ENCODE measurements at regions of chr2 and their contacts with region 1.

Region 1: DNA sequence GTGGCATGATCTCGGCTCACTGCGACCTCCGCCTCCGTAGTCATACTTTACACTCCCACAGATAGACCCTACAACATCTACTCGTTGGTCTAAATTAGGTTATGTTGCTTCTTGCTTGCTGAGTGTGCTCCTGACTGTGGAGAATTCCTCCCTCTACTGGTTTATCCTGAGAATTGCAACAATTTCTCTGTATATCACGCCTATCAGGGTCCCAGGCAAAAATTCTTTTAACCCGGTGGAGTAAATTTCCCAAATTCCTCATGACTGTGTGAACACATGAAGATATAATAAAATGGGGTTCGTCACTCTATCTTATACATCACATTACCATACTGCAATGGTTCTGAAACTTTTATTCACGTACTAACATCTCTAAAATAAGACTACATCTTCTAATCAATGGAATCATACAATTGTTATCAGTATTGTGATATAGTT is 156.7 kb downstream of the EVA1A start:
- DNase-seq: peak in 1 of 2 donors; percentile 7
- ATAC-seq: peak in 4 of 8 donors; percentile 47 to 61 (median 50)
- H3K4me3 ChIP-seq: no peak overlapping the region
- H3K27ac ChIP-seq: no peak overlapping the region
- H3K4me1 ChIP-seq: no peaks in the 10 kb centered on the region
- H3K27me3 ChIP-seq: peaks cover 0 to 59% (median 28%) of the 10 kb centered on the region in 7 donors
- CTCF ChIP-seq: peak; percentile 64 to 91 (median 79)

Region 2: GRCh38 chr2:74690571-74690970 is 713.4 kb before region 1 on chr2:
- intact Hi-C with region 1: loop called in 1 of 10 experiments (anchors 10 kb)
- DNase-seq: peak in 1 of 2 donors; percentile 13
- ATAC-seq: peak in 6 of 8 donors; percentile 38 to 80 (median 54)
- H3K4me3 ChIP-seq: no peak overlapping the region
- H3K27ac ChIP-seq: no peak overlapping the region
- H3K4me1 ChIP-seq: peaks cover 0 to 3% (median 0%) of the 10 kb centered on the region in 9 donors
- H3K27me3 ChIP-seq: peaks cover 0 to 14% (median 0%) of the 10 kb centered on the region in 7 donors
- CTCF ChIP-seq: peak in 8 of 9 donors; percentile 18 to 78 (median 71)

Region 3: DNA sequence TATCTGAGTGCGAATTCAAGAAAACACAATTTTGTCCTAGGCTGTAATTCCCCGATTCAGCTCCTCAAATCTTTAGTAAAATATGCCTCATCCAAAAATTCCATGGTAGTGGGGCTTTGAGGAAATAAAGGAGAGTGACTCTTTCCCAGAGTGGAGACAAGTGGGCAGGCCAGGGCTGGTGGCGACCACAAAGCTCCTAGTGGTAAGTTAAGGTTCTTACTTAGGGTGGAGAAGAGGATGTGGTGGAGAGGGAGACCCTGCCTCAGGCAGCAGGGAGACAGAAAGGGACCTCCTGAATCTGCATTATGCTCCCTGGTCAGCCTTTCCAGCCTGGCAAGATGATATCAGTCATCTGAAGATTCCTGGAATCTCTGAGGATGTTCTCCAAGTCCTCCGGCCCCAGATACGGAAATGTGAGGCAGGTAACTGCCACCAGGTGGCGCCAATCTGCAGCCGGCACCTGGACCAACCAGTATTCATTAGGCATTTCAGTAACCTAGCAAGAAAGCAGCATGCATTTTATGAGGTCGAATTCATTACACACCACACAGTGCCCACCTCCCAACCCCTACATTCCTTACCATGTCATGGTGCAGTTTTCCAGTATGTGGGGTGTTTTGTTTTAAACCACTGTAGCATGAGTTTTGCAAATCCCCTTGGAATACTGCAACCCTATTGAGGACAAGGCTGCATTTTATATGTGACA is 339.2 kb before region 1 on chr2:
- intact Hi-C with region 1: loop called in 6 of 10 experiments (anchors 5 to 10 kb)
- DNase-seq: peak in 1 of 2 donors; percentile 45
- ATAC-seq: no peak
- H3K4me3 ChIP-seq: no peak overlapping the region
- H3K27ac ChIP-seq: no peak overlapping the region
- H3K4me1 ChIP-seq: no peaks in the 10 kb centered on the region
- H3K27me3 ChIP-seq: no peaks in the 10 kb centered on the region
- CTCF ChIP-seq: peak; percentile 50 to 91 (median 66)

Region 4: DNA sequence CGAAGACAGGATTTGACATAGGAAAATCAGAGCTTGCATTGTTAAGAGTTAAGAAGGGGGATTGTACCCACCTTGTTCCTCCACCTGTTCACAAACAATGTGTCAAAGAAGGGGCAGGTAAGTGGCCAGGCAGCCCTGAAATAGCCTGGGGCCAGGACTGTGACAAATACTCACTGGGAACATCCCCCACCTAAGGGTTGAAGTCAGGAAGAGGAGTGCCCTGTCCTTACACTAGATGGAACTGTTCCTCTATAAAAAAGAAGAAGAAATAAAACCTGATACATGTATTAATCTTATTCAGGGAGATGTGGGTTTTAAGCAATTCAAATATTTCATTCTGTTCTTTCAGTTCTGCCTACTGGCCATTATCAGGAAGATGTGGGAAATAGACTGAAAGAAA is 246.6 kb before region 1 on chr2:
- intact Hi-C with region 1: loop called in 1 of 10 experiments (anchors 1 kb)
- DNase-seq: no peak
- ATAC-seq: peak in 1 of 8 donors; percentile 49
- H3K4me3 ChIP-seq: no peak overlapping the region
- H3K27ac ChIP-seq: no peak overlapping the region
- H3K4me1 ChIP-seq: peaks cover 0 to 18% (median 4%) of the 10 kb centered on the region in 9 donors
- H3K27me3 ChIP-seq: no peaks in the 10 kb centered on the region
- CTCF ChIP-seq: peak in 6 of 9 donors; percentile 12 to 48 (median 25)

Region 5: GRCh38 chr2:75199428-75200011 is 204.5 kb before region 1 on chr2 and contains the start of gene TACR1:
- intact Hi-C with region 1: loop called in 5 of 10 experiments (anchors 5 to 10 kb)
- DNase-seq: peak; percentile 52 to 64
- ATAC-seq: peak; percentile 69 to 87 (median 78)
- H3K4me3 ChIP-seq: peak within 1 kb of the TSS; percentile 27 to 55 (median 45)
- H3K27ac ChIP-seq: no peak within 1 kb of the TSS
- H3K4me1 ChIP-seq: peaks cover 5 to 24% (median 19%) of the 10 kb centered on the region in 9 donors
- H3K27me3 ChIP-seq: peaks cover 0 to 92% (median 64%) of the 10 kb centered on the region in 7 donors
- CTCF ChIP-seq: peak in 8 of 9 donors; percentile 21 to 73 (median 60)
- total RNA-seq, gene TACR1: 0.07 to 0.38 (median 0.21) TPM in 7 of 10 donors, not detected in the others

Region 6: GRCh38 chr2:75311993-75312392 is 92.0 kb before region 1 on chr2:
- intact Hi-C with region 1: no loop called
- DNase-seq: no peak
- ATAC-seq: no peak
- H3K4me3 ChIP-seq: no peak overlapping the region
- H3K27ac ChIP-seq: no peak overlapping the region
- H3K4me1 ChIP-seq: no peaks in the 10 kb centered on the region
- H3K27me3 ChIP-seq: no peaks in the 10 kb centered on the region
- CTCF ChIP-seq: no peak